ENCODE measurements at regions of chr15 and their contacts with region 1.

Region 1: GRCh38 chr15:50908210-50909009 is at the start of gene AP4E1:
- DNase-seq: peak; percentile 96
- H3K4me3 ChIP-seq: peak within 1 kb of the TSS; percentile 78 to 96 (median 92)
- H3K27ac ChIP-seq: peak within 1 kb of the TSS; percentile 90 to 95 (median 93)
- H3K4me1 ChIP-seq: peaks cover 0 to 33% (median 26%) of the 10 kb centered on the region in 4 donors
- H3K27me3 ChIP-seq: no peaks in the 10 kb centered on the region
- CTCF ChIP-seq: peak; percentile 83 to 96 (median 90)
- EP300 ChIP-seq: no peak
- POLR2A ChIP-seq: peak in 1 of 2 donors; percentile 17
- total RNA-seq, gene AP4E1: 7.3 to 8.3 (median 8.0) TPM

Region 2: DNA sequence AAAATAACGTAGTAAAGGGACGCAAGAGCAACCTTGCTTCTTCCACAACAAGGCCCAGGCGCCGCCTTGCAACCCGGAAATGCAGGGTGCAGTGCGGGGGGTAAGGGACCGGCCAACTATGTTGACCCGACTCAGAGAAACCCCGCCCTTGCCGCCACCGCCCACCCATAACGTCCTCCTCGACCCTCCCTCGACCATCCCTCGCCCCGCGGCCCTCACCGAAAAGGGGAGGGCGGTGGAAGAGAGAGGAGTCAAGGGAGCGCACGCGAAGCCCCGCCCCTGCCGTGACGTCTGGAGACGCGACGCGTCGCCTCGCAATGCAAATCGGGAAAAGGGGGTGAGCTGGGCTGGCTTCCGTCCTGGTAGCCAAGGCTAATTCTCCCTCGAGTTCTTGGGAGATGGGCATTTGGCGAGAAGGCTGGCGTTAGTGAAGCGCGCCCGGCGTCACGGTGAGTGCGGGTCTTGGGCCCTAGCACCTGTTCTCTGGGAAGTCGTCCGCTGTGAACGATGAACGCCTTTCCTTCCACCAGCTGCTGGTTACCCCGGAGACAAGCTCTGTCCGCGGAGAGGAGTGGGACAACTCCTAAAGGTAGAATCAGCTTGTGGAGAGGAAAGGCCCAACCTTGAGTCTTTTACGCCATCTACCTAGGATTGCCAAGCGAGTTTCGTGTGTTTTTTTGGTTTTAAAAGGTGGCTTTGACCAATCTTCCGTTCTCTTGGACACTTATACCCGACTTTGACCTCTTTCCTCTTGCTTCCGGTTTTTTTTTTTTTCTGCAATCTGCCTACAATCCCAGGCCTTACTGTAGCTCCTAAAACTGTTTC is 484.1 kb before region 1 on chr15 and contains the start of gene USP8:
- intact Hi-C with region 1: loop called (anchors 10 kb)
- DNase-seq: peak; percentile 97
- H3K4me3 ChIP-seq: peak within 1 kb of the TSS; percentile 69 to 76 (median 71)
- H3K27ac ChIP-seq: peak within 1 kb of the TSS; percentile 87 to 90 (median 88)
- H3K4me1 ChIP-seq: peaks cover 0 to 35% (median 23%) of the 10 kb centered on the region in 4 donors
- H3K27me3 ChIP-seq: no peaks in the 10 kb centered on the region
- CTCF ChIP-seq: no peak
- EP300 ChIP-seq: no peak
- POLR2A ChIP-seq: peak; percentile 70 to 89
- total RNA-seq, gene USP8: 49.4 to 59.2 (median 50.1) TPM

Region 3: DNA sequence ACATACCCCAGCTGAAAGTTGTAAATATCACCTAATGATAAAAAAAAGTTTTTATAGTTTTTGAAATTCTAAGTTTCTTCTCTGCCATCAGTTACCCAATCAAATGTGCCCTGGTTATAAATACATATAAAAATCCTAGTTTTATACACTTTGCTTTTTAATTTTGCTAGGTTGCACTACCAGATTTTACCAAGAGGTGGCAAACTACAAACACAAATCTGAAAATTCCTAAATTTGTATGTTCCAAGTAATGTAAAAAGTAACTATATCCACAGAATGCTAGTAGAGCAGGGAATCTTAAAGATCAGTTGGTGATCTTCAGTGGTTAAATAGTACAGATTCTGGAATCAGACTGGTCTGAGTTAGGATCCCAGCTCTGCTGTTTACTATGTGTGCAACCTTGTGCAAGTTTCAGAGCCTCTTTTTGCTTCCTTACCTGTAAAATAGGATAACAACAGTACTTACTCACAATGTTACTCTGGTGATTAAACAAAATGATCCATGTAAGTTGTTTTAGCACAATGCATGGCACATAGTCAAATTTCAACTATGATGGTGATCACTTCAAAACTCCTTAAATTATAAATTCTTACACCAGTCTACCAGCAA is 232.8 kb before region 1 on chr15:
- intact Hi-C with region 1: loop called (anchors 2 kb)
- DNase-seq: no peak
- H3K4me3 ChIP-seq: no peak overlapping the region
- H3K27ac ChIP-seq: no peak overlapping the region
- H3K4me1 ChIP-seq: peaks cover 0 to 25% (median 12%) of the 10 kb centered on the region in 4 donors
- H3K27me3 ChIP-seq: no peaks in the 10 kb centered on the region
- CTCF ChIP-seq: peak; percentile 34 to 73 (median 64)
- EP300 ChIP-seq: no peak
- POLR2A ChIP-seq: no peak

Region 4: GRCh38 chr15:51004103-51004551 is 95.7 kb after region 1 on chr15:
- intact Hi-C with region 1: no loop called
- DNase-seq: no peak
- H3K4me3 ChIP-seq: no peak overlapping the region
- H3K27ac ChIP-seq: no peak overlapping the region
- H3K4me1 ChIP-seq: no peaks in the 10 kb centered on the region
- H3K27me3 ChIP-seq: no peaks in the 10 kb centered on the region
- CTCF ChIP-seq: no peak
- EP300 ChIP-seq: no peak
- POLR2A ChIP-seq: no peak

Measured in sigmoid colon (tissue), 7 donors.